ENCODE measurements at regions of chr4 and their contacts with region 1.

Region 1: GRCh38 chr4:108018040-108018883 is 28.6 kb downstream of the HADH start:
- DNase-seq: peak; percentile 91
- ATAC-seq: peak; percentile 89
- H3K4me3 Mint-ChIP-seq: no peak overlapping the region
- H3K27ac Mint-ChIP-seq: no peak overlapping the region
- H3K4me1 Mint-ChIP-seq: peaks cover 10% of the 10 kb centered on the region
- H3K27me3 Mint-ChIP-seq: no peaks in the 10 kb centered on the region

Region 2: DNA sequence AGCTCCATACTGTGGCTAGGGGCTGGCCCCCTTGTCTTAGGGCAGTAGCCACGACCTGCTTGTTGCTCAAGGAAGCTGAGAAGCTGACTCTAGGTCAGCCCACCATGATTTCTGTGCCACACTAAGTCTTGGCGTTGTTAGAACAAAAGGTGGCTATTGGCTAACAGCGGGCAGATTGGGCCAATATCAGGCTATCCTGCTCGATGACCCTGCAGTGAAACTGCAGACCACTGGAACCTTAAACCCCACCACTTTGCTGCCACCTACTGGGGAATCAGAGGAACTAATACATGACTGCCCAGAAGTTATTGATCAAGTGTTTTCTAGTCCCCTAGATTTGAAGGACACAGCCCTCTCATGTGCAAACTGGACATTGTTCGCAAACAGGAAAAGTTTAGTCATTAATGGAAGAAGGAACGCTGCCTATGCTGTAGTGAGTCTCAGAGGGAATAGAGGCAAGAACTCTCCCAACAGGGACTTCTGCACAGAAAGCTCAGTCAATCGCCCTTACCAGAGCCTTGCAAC is 281.3 kb before region 1 on chr4:
- CTCF ChIA-PET with region 1: no interaction called
- POLR2A ChIA-PET with region 1: no interaction called
- intact Hi-C with region 1: no loop called
- DNase-seq: peak; percentile 50
- ATAC-seq: peak; percentile 64
- H3K4me3 Mint-ChIP-seq: no peak overlapping the region
- H3K27ac Mint-ChIP-seq: no peak overlapping the region
- H3K4me1 Mint-ChIP-seq: no peaks in the 10 kb centered on the region
- H3K27me3 Mint-ChIP-seq: no peaks in the 10 kb centered on the region

Region 3: GRCh38 chr4:107780665-107781064 is 237.6 kb before region 1 on chr4:
- CTCF ChIA-PET with region 1: no interaction called
- POLR2A ChIA-PET with region 1: no interaction called
- intact Hi-C with region 1: no loop called
- DNase-seq: peak; percentile 41
- ATAC-seq: no peak
- H3K4me3 Mint-ChIP-seq: no peak overlapping the region
- H3K27ac Mint-ChIP-seq: no peak overlapping the region
- H3K4me1 Mint-ChIP-seq: no peaks in the 10 kb centered on the region
- H3K27me3 Mint-ChIP-seq: peaks cover 24% of the 10 kb centered on the region

Region 4: DNA sequence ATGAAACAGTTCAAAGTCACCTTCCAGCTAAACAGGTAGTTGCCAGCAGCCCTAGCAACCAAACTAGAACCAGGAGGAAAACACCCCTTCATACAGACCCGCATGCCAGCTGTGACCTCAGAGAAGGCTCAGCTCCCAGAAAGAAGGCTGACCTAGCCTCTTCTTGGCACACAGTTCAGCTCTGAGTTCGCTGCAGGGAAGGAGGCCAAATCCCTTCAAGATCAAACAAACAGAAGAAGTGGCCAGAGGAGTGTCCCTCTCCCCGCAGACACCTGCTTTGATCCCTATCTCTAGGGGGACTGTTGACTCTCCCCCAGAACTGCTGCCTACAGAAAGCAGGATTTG is 27.4 kb after region 1 on chr4:
- CTCF ChIA-PET with region 1: interaction called, 12 read pairs
- POLR2A ChIA-PET with region 1: no interaction called
- intact Hi-C with region 1: no loop called
- DNase-seq: peak; percentile 62
- ATAC-seq: no peak
- H3K4me3 Mint-ChIP-seq: no peak overlapping the region
- H3K27ac Mint-ChIP-seq: peak overlapping the region; percentile 88
- H3K4me1 Mint-ChIP-seq: peaks cover 66% of the 10 kb centered on the region
- H3K27me3 Mint-ChIP-seq: no peaks in the 10 kb centered on the region

Region 5: DNA sequence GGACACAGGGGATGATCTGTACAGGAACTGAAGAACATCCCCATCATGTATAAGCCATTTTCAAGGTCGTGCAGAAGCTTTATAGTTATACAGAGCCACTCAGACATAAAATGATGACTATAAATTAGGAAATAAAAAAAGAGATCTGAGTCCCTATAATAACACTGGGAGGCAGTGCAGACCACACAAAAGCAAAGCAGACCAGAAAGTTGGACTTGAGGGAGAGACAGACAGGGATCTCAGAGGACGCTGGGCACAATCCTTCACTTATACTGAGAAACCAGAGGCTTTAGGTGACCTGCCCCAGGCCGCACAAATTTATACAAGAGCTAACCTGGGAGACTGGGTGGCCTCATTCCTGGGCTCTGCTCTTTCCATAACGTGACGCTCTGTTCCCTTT is 41.9 kb after region 1 on chr4:
- CTCF ChIA-PET with region 1: interaction called, 15 read pairs
- POLR2A ChIA-PET with region 1: no interaction called
- intact Hi-C with region 1: no loop called
- DNase-seq: no peak
- ATAC-seq: no peak
- H3K4me3 Mint-ChIP-seq: no peak overlapping the region
- H3K27ac Mint-ChIP-seq: no peak overlapping the region
- H3K4me1 Mint-ChIP-seq: peaks cover 86% of the 10 kb centered on the region
- H3K27me3 Mint-ChIP-seq: no peaks in the 10 kb centered on the region

Region 6: DNA sequence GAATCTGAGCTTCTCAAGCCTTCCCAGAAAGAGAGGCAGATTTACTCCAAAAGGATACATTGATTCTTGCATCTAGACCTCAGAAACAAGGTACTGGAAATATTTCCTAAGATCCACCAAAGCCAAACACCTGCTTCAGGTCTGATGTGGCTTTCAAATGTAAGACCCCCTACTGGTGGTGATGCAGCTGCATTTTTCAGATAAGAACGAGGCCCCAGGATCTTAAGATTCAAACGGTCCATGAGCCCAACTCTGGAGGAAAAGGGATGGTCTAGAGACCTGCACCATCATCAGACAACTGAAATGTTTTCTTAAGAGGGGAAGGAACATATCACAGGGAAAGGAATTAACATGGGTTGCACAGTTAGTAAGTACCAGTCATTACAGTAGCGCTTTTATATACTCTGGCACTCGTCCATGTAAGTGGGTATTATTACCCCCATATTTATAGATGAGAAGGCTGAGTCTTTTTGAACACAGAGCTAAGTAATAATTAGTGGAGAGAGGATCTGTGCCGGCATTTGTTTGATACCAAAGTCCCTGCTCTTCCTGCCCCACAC is 76.7 kb after region 1 on chr4:
- CTCF ChIA-PET with region 1: no interaction called
- POLR2A ChIA-PET with region 1: no interaction called
- intact Hi-C with region 1: no loop called
- DNase-seq: no peak
- ATAC-seq: peak; percentile 45
- H3K4me3 Mint-ChIP-seq: no peak overlapping the region
- H3K27ac Mint-ChIP-seq: peak overlapping the region; percentile 81
- H3K4me1 Mint-ChIP-seq: peaks cover 86% of the 10 kb centered on the region
- H3K27me3 Mint-ChIP-seq: no peaks in the 10 kb centered on the region

Region 7: DNA sequence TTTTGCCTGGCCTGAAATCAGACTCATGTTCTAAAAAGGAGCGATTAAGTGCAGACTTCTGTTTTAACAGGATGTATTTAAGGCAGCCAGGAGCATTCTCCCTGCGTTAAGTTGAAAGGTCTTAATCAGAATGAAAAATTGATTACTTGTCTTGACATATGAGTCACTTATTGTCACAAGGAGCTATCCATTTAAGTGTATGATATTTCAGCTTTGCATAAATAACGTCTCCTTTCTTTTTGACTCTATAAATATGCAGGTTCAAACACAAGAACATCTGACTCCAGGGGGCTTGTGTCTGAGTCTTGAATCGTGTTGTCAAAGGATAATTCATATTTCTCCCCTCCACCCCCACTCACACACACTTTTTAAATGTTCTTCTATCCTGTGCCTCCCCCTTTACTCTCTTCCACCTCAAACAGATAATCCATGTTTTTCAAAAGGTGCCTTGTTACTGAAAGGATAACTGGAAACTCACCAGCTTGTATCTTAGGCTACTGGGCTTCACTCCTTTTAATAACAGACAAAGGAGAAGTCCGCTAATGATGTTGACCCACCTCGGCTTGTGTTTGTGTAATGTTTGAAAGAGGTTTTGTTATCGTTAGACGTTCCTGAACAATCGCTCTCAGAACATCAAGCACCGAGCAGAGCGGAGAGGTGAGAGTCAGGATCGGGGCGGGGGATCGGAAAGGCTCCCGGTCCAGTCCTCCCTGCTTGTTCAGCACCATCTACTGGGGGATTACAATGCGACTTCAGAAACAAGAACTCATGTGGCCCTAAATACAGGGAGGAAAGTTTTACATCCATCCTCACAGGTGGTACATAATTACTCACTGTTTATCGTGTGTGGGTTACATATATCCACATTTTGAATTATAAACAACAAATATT is 494.6 kb after region 1 on chr4:
- CTCF ChIA-PET with region 1: interaction called, 6 read pairs
- POLR2A ChIA-PET with region 1: no interaction called
- intact Hi-C with region 1: loop called (anchors 1 to 5 kb)
- DNase-seq: peak; percentile 64
- ATAC-seq: peak; percentile 95
- H3K4me3 Mint-ChIP-seq: peak overlapping the region; percentile 58
- H3K27ac Mint-ChIP-seq: peak overlapping the region; percentile 2
- H3K4me1 Mint-ChIP-seq: peaks cover 18% of the 10 kb centered on the region
- H3K27me3 Mint-ChIP-seq: peaks cover 2% of the 10 kb centered on the region

Region 8: DNA sequence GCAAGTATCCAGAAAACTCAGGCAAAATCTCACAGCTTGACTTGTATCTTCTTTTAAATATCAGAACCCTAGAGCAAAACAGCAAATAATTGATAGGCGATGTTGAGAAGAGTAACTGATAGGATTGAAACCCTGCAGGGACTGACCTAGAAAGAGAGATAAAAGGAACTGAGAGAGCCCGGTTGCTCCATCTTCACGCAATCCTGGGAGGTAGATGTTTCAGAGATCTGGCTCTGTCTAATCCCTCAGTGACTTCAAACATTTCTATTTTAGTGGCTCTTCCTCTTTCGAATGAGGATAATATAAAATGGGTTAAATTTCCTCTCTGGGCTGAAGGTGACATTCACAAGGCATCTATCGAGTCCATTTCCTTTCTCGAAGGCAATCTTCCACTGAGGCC is 562.8 kb after region 1 on chr4:
- CTCF ChIA-PET with region 1: interaction called, 11 read pairs
- POLR2A ChIA-PET with region 1: no interaction called
- intact Hi-C with region 1: no loop called
- DNase-seq: no peak
- ATAC-seq: no peak
- H3K4me3 Mint-ChIP-seq: no peak overlapping the region
- H3K27ac Mint-ChIP-seq: no peak overlapping the region
- H3K4me1 Mint-ChIP-seq: peaks cover 7% of the 10 kb centered on the region
- H3K27me3 Mint-ChIP-seq: no peaks in the 10 kb centered on the region